Esophagus squamous epithelium (tissue), 5 donors: ENCODE measurements at regions of chr1 and their contacts with region 1.

Region 1: GRCh38 chr1:211654838-211655787 is 20.3 kb downstream of the NEK2 start:
- DNase-seq: peak; percentile 20
- H3K4me3 ChIP-seq: no peak overlapping the region
- H3K27ac ChIP-seq: no peak overlapping the region
- H3K4me1 ChIP-seq: peaks cover 0 to 5% (median 0%) of the 10 kb centered on the region in 3 donors
- H3K27me3 ChIP-seq: no peaks in the 10 kb centered on the region
- CTCF ChIP-seq: peak; percentile 68 to 96 (median 94)
- POLR2A ChIP-seq: no peak

Region 2: GRCh38 chr1:210400043-210400840 is 1254.9 kb before region 1 on chr1:
- intact Hi-C with region 1: loop called (anchors 10 kb)
- DNase-seq: no peak
- H3K4me3 ChIP-seq: no peak overlapping the region
- H3K27ac ChIP-seq: no peak overlapping the region
- H3K4me1 ChIP-seq: peaks cover 0 to 7% (median 0%) of the 10 kb centered on the region in 3 donors
- H3K27me3 ChIP-seq: no peaks in the 10 kb centered on the region
- CTCF ChIP-seq: peak; percentile 52 to 85 (median 78)
- POLR2A ChIP-seq: no peak

Region 3: GRCh38 chr1:211323156-211324063 is 331.7 kb before region 1 on chr1:
- intact Hi-C with region 1: loop called (anchors 10 kb)
- DNase-seq: no peak
- H3K4me3 ChIP-seq: no peak overlapping the region
- H3K27ac ChIP-seq: no peak overlapping the region
- H3K4me1 ChIP-seq: peaks cover 0 to 22% (median 3%) of the 10 kb centered on the region in 3 donors
- H3K27me3 ChIP-seq: no peaks in the 10 kb centered on the region
- CTCF ChIP-seq: peak; percentile 67 to 85 (median 80)
- POLR2A ChIP-seq: no peak

Region 4: GRCh38 chr1:211476200-211476849 is 178.8 kb before region 1 on chr1:
- intact Hi-C with region 1: loop called (anchors 10 kb)
- DNase-seq: no peak
- H3K4me3 ChIP-seq: no peak overlapping the region
- H3K27ac ChIP-seq: no peak overlapping the region
- H3K4me1 ChIP-seq: peaks cover 0 to 5% (median 4%) of the 10 kb centered on the region in 3 donors
- H3K27me3 ChIP-seq: peaks cover 0 to 27% (median 0%) of the 10 kb centered on the region in 4 donors
- CTCF ChIP-seq: peak; percentile 57 to 77 (median 69)
- POLR2A ChIP-seq: no peak

Region 5: GRCh38 chr1:211520641-211521040 is 134.5 kb before region 1 on chr1:
- intact Hi-C with region 1: loop called (anchors 5 kb)
- DNase-seq: no peak
- H3K4me3 ChIP-seq: no peak overlapping the region
- H3K27ac ChIP-seq: no peak overlapping the region
- H3K4me1 ChIP-seq: peaks cover 3 to 18% (median 5%) of the 10 kb centered on the region in 3 donors
- H3K27me3 ChIP-seq: no peaks in the 10 kb centered on the region
- CTCF ChIP-seq: peak in 1 of 6 experiments; percentile 5
- POLR2A ChIP-seq: no peak

Region 6: DNA sequence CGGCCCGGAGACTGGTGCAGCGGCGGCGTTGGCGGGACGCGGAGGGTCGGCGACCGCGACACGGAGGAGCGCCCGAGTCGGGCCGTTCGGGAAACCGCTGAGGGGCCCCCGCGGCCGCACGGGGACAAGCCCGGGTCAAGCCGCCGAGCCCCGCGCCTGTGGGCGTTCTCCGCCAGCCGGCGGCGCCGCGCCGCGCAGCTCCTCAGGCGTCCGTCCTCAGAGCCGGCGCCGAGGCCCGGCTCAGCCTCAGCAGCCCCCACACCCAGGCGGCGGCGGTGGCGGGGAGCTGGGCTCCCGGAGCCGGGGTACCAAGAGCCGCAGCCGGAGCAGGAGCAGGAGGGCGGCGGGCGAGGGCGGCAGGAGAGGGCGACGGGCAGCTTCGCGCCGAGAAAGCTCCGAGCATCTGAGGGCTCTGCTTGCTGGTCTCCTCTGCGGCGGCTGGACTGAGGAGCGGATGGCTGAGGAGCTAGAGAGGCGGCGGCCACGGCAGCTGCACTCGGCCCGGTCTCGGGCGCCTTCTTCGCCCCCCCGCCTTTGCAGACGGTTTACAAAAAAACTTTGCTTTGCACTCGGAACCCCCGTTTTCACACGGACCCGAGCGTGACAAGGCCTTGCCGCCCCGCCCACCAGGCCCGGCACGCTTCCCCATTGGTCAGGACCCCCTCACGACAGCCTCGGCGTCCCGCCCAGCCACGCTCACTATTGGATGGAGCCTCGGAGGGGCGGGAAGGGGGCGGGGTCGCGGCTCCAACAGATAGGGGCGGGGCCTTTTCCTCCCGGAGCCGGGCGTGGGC is 76.3 kb before region 1 on chr1 and contains the start of gene SLC30A1:
- intact Hi-C with region 1: loop called (anchors 5 kb)
- DNase-seq: peak; percentile 93
- H3K4me3 ChIP-seq: peak within 1 kb of the TSS; percentile 87 to 99 (median 91)
- H3K27ac ChIP-seq: peak within 1 kb of the TSS; percentile 94 to 97 (median 97)
- H3K4me1 ChIP-seq: peaks cover 3 to 63% (median 21%) of the 10 kb centered on the region in 3 donors
- H3K27me3 ChIP-seq: no peaks in the 10 kb centered on the region
- CTCF ChIP-seq: peak in 1 of 6 experiments; percentile 8
- POLR2A ChIP-seq: peak in 3 of 4 donors; percentile 83 to 97 (median 92)
- total RNA-seq, gene SLC30A1: 8.3 to 12.4 (median 10.3) TPM

Region 7: GRCh38 chr1:211606914-211607755 is 48.0 kb before region 1 on chr1:
- intact Hi-C with region 1: no loop called
- DNase-seq: peak; percentile 17
- H3K4me3 ChIP-seq: peak overlapping the region in 1 of 4 donors; percentile 26
- H3K27ac ChIP-seq: peak overlapping the region in 3 of 4 donors; percentile 4 to 64 (median 43)
- H3K4me1 ChIP-seq: peaks cover 8 to 41% (median 22%) of the 10 kb centered on the region in 3 donors
- H3K27me3 ChIP-seq: no peaks in the 10 kb centered on the region
- CTCF ChIP-seq: no peak
- POLR2A ChIP-seq: peak in 1 of 4 donors; percentile 21

Region 8: GRCh38 chr1:211625040-211625439 is 30.1 kb before region 1 on chr1:
- intact Hi-C with region 1: no loop called
- DNase-seq: no peak
- H3K4me3 ChIP-seq: no peak overlapping the region
- H3K27ac ChIP-seq: no peak overlapping the region
- H3K4me1 ChIP-seq: peaks cover 0 to 14% (median 7%) of the 10 kb centered on the region in 3 donors
- H3K27me3 ChIP-seq: no peaks in the 10 kb centered on the region
- CTCF ChIP-seq: peak in 1 of 6 experiments; percentile 19
- POLR2A ChIP-seq: no peak

Region 9: GRCh38 chr1:211908453-211908852 is 253.3 kb after region 1 on chr1:
- intact Hi-C with region 1: no loop called
- DNase-seq: no peak
- H3K4me3 ChIP-seq: no peak overlapping the region
- H3K27ac ChIP-seq: no peak overlapping the region
- H3K4me1 ChIP-seq: peaks cover 0 to 14% (median 4%) of the 10 kb centered on the region in 3 donors
- H3K27me3 ChIP-seq: no peaks in the 10 kb centered on the region
- CTCF ChIP-seq: no peak
- POLR2A ChIP-seq: no peak